Posterior cingulate gyrus (tissue), 11 donors: ENCODE measurements at regions of chr10 and their contacts with region 1.

Region 1: GRCh38 chr10:103888113-103888841 is 29.7 kb downstream of the STN1 start:
- DNase-seq: peak in 2 of 10 donors; percentile 21 to 31

Region 2: GRCh38 chr10:103712570-103713498 is 175.4 kb before region 1 on chr10:
- intact Hi-C with region 1: loop called (anchors 1 kb)
- DNase-seq: peak; percentile 69 to 98 (median 89)

Region 3: DNA sequence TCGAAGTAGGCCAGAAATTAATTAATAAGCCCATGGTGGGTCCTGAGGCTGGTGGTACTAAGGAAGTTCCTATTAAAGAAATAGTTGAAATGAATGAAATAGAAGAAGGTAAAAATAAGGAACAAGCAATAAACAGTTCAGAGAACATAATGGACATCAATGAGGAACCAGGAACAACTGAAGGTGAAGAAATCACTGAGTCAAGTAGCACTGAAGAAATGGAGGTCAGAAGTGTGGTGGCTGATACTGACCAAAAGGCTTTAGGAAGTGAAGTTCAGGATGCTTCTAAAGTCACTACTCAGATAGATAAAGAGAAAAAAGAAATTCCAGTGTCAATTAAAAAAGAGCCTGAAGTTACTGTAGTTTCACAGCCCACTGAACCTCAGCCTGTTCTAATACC is 114.6 kb after region 1 on chr10:
- intact Hi-C with region 1: no loop called
- DNase-seq: no peak

Region 4: DNA sequence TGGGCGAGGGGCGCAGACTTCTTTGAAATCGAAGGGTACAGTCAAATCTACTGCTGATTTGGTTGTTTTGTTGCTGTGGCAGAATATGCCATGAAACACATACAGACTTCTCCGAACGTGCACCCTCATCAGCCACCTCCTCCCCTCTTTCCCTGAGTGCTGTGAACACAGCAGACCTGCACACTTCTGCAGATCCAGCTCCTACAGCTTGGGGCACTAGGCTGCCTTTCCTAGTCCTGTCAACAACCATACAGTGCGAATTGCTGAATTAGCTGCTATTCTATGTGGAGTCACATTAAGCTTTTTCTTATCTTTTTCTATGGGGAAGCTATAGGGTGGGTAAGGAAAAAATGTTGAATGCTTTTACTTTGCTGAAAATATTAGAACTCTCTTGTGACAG is 139.9 kb after region 1 on chr10:
- intact Hi-C with region 1: loop called (anchors 10 kb)
- DNase-seq: peak in 8 of 10 donors; percentile 51 to 95 (median 69)

Region 5: DNA sequence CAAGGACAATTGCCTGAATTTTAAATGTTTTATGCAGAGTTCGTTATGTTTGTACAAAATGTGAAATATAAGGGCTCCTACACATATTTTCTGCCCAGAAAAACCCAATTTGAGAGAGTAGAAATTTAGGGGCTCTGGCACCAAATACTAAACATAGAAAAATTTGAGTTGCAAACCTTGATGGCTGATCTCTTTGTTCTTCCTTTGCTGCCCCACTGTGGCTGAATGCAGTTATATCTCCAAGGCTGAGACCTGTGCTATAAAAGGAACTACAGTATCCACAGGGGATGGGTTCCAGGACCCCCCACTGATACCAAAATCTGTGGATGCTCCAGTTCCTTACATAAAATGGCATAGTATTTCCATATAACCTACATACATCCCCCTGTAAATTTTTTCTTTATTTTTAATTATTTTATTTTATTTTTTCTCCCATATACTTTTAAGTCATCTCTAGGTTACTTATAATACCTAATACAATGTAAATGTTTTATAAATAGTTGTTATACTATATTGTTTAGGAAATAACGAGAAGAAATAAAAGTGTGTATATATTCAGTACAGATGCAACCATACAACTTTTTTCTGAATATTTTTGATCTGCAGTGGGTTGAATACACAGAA is 321.4 kb after region 1 on chr10:
- intact Hi-C with region 1: loop called (anchors 1 kb)
- DNase-seq: peak in 6 of 10 donors; percentile 16 to 69 (median 58)